Tibial artery (tissue), 4 donors: ENCODE measurements at regions of chr7 and their contacts with region 1.

Region 1: DNA sequence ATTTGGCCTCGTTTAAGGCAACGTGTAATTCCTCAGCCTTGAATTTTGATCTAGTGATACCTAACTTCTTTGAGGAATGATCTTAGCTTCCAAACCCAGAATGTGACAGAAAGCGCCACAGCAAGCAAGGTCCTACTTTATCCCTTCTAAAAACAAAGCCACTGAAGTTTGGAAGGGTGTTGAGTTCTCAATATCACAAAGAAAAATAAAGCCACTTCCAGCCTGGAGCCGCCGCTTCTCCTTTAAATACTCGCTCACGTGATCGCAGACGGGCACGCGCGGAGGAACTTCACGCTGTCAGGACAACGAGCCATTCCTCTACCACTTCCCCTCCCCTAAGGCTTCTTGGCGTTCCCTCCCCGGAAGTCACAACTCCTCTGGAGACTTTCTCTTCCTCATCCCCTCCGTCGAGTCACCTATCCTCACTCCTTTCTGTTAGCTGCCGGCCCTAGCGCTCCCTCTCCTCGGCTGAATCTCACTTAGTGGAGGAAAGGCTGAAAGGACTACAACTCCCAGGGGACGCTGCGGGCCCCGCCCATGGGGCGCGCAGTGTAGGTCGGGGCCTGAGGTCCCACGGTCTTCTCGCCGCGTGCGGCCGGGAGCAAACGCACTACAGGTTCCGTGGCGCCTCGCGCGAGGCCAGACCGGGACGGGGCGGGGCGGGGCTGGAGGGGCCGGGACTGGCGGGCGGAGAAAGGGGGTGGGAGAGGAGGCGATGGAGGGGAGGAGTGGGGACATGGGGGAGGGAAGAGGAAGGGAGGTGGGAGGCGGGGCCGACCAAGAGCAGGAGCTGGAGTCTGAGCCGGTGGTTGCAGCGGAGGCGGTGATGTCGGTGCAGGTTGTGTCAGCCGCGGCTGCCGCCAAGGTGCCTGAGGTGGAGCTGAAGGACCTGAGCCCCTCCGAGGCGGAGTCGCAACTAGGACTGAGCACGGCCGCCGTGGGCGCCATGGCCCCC is at the start of gene AHCYL2:
- DNase-seq: peak; percentile 97 to 99
- H3K4me3 ChIP-seq: peak within 1 kb of the TSS; percentile 82 to 100
- H3K27ac ChIP-seq: peak within 1 kb of the TSS; percentile 90 to 93
- H3K4me1 ChIP-seq: peaks cover 0 to 15% (median 3%) of the 10 kb centered on the region in 4 donors
- H3K27me3 ChIP-seq: peaks cover 0 to 2% of the 10 kb centered on the region in 2 donors
- CTCF ChIP-seq: no peak

Region 2: DNA sequence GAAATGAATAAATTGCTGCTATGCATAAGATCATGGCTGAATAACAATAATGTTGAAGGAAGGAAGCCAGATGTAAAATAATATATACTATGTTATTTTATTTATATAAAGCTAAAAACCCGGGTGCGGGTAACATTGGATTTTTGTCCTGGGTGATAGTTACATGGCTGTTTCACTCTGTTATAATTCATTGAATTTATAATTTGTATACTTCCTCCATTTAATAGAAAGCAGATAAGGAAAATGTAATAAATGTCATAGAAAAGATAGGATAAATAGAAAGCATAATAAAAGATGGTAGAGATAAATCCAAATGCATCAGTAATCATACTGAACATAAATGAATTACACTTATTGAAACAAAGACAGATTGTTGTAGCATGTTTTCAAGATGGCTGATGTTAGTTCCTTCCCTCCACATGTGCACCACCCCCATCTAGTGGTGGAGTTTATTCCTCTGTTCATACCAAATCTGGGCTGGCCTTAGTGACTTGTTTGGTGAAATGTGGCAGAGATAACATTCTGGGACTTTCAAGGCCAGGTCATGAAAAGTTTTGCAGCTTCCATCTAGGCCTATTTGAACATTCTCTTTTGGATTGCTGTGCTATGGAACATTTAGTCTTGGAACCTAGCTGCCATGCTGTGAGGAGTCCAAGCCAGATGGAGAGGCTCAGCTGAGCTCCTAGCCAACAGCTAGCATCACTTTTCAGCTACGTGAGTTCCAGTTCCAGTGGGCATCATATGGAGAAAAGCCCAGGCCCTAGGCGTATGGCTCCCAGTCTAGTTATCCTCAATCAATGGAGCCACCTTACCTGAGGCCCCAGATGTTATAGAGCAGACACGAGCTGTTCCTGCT is 47.2 kb after region 1 on chr7:
- intact Hi-C with region 1: loop called (anchors 10 kb)
- DNase-seq: peak in 1 of 2 donors; percentile 29
- H3K4me3 ChIP-seq: no peak overlapping the region
- H3K27ac ChIP-seq: no peak overlapping the region
- H3K4me1 ChIP-seq: no peaks in the 10 kb centered on the region
- H3K27me3 ChIP-seq: no peaks in the 10 kb centered on the region
- CTCF ChIP-seq: peak; percentile 28 to 33